AG04450 (cell line): ENCODE measurements at regions of chr16 and their contacts with region 1.

Region 1: GRCh38 chr16:83913245-83913633 is 14.3 kb downstream of the MLYCD start:
- DNase-seq: no peak
- H3K4me3 ChIP-seq: no peak overlapping the region
- H3K27ac ChIP-seq: no peak overlapping the region
- H3K27me3 ChIP-seq: no peaks in the 10 kb centered on the region
- CTCF ChIP-seq: no peak

Region 2: DNA sequence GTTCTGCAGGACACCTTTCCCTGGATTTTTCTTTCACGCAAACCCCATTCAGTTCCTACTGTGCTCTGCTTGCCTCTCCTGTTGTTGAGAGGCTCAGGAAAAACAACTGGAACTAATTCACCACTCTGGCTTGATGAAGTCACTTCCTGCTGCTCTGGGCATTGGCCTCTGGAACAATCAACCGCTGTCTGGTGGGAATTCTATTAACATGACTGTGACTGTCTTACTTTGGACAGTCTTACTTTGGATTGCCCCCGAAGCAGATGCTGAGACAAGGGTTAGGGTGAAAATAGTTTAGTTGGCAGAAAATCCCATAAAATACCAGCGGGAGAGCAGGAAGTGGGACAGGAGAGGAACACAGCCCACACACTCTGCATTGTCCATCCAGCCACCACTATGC is 195.4 kb before region 1 on chr16:
- CTCF ChIA-PET with region 1: no interaction called
- POLR2A ChIA-PET with region 1: no interaction called
- DNase-seq: no peak
- H3K4me3 ChIP-seq: no peak overlapping the region
- H3K27ac ChIP-seq: no peak overlapping the region
- H3K27me3 ChIP-seq: no peaks in the 10 kb centered on the region
- CTCF ChIP-seq: no peak

Region 3: GRCh38 chr16:83926726-83927397 is 13.6 kb after region 1 on chr16:
- CTCF ChIA-PET with region 1: interaction called, 13 read pairs
- POLR2A ChIA-PET with region 1: interaction called, 3 read pairs
- DNase-seq: peak; percentile 30
- H3K4me3 ChIP-seq: no peak overlapping the region
- H3K27ac ChIP-seq: peak overlapping the region; percentile 31
- H3K27me3 ChIP-seq: no peaks in the 10 kb centered on the region
- CTCF ChIP-seq: peak; percentile 98